Breast epithelium (tissue), 4 donors: ENCODE measurements at regions of chr7 and their contacts with region 1.

Region 1: DNA sequence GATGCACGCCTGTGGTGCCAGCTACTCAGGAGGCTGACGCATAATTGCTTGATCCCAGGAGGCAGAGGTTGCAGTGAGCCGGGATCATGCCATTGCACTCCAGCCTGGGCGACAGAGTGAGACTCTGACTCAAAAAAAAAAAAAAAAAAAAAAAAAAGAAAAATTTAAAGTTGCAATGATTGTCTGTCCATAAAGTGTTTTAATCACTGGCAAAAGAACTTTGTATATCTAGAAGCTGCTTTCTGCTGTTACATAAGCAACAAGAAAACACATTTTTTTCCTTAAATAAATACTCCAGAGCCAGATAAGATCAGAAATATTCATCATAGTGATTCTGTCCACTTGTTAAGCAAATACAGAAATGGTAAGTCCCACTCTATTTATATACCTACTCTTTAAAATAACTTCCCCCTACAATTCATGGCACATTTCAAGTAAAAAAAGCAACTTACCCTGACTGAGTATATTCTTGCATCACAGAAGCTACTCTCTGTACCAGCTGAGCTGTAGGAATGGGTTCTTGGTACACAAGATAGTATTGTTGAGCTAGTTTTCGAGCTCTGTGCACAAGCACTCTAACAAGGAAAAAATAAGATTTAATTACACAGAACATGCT is 7.6 kb downstream of the PSMA2 start:
- DNase-seq: no peak
- H3K4me3 ChIP-seq: no peak overlapping the region
- H3K27ac ChIP-seq: no peak overlapping the region
- H3K4me1 ChIP-seq: peaks cover 0 to 1% of the 10 kb centered on the region in 2 donors
- H3K27me3 ChIP-seq: no peaks in the 10 kb centered on the region
- CTCF ChIP-seq: no peak
- POLR2A ChIP-seq: no peak

Region 2: GRCh38 chr7:42939457-42940240 is 15.3 kb after region 1 on chr7:
- intact Hi-C with region 1: loop called (anchors 2 kb)
- DNase-seq: no peak
- H3K4me3 ChIP-seq: no peak overlapping the region
- H3K27ac ChIP-seq: no peak overlapping the region
- H3K4me1 ChIP-seq: no peaks in the 10 kb centered on the region
- H3K27me3 ChIP-seq: no peaks in the 10 kb centered on the region
- CTCF ChIP-seq: no peak
- POLR2A ChIP-seq: no peak

Region 3: DNA sequence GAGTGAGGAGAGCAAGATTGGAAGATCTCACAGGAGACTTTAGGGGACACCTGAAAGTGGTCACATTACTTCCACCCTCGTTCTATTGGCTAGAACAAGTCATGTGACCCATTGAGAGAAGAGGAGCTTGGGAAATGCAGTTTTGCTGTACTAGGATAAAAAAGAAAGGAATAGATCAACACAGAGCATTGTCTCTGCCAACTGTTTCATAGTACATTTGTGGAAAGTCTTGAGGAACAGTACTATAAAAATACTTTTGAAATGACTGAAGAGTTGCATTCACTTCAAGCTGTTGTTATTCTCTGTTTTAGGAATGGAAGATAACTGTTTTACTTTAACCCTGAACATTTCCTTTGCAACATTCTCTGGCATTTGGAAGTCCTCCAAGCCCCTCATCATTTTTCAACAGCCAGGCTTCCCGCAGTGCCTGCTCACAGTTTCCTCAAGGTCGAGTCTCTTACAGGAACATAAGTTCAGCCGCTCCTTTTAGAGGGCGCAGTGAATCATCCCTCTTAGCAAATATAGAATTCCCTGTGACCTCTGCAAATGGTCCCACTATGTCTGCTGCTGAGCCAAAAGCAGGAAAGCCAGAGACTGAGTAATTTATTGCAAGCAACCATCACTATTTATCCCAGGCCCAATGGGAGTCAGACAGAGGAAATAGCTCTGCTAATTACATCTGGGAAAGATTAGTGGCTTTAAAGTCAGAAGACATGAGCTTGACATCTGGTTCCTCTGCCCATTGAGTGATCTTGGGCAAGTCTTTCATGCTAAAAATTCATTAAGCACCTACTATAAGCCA is 48.6 kb after region 1 on chr7:
- intact Hi-C with region 1: no loop called
- DNase-seq: no peak
- H3K4me3 ChIP-seq: no peak overlapping the region
- H3K27ac ChIP-seq: peak overlapping the region in 1 of 2 donors; percentile 61
- H3K4me1 ChIP-seq: no peaks in the 10 kb centered on the region
- H3K27me3 ChIP-seq: no peaks in the 10 kb centered on the region
- CTCF ChIP-seq: no peak
- POLR2A ChIP-seq: no peak

Region 4: DNA sequence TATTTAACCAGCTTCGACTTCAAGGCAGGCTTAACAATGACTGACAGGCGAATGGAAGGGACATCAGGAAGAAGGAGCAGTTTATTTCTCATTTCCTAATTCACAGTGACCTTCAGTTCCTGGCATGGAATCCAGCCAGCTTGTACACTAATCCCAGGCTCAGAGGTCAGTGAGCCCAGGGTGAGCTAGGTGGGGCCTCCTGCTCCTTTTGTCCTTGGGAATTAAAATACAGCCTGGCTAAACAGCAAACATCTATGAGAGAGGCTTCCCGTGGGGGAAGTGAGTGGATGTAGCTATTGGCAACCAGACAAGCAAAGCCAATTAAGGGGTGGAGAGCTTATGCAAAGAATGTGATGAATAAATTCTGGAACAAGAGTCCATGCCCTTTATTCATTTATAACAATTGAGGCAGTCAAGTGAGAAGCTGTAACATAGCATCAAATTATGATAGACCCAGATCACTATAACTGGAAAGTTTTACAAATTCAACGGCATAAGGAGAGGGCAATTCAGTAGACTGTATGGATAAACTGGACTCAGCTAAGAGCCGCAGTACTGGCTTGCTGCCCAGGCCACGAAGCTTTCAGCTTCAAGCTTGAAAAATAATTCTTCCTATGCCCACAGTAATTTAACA is 715.6 kb after region 1 on chr7:
- intact Hi-C with region 1: no loop called
- DNase-seq: no peak
- H3K4me3 ChIP-seq: no peak overlapping the region
- H3K27ac ChIP-seq: peak overlapping the region; percentile 59 to 68
- H3K4me1 ChIP-seq: no peaks in the 10 kb centered on the region
- H3K27me3 ChIP-seq: no peaks in the 10 kb centered on the region
- CTCF ChIP-seq: no peak
- POLR2A ChIP-seq: no peak